ENCODE measurements at regions of chr18 and their contacts with region 1.

Region 1: DNA sequence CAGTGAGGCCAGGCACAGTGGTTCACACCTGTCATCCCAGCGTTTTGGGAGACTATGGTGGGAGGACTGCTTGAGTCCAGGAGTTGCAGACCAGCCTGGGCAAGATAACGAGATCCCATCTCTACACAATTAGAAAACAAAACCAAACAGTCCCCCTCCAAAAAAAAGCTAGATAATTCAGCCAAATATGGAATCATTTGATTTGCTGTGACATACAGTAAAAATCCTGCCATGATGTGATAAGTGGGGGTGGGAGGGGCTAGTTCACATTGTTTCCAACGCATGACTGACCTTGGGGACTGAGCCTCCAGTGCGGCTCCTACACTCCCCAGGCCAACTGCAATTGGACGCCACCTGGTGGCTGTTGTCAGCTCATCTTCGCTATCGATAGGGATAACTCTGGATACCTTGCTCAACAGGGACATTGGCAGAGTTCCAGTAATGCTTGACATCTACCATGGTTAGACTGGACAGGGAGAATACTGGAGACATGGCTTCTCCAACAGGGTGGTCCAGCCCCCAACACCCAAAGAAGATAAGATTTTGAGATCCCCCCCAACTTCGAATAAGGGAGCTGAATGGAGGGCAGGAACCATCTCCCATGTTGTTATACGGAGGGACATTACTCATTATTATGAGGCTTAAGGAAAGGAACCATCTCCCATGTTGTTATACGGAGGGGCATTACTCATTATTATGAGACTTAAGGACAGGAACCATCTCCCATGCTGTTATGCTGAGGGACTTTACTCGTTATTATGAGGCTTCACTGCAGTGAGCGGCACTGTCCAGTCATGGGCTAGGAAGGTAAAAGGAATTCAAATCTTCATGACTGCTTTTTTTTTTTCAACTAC is 135.9 kb downstream of the TGIF1 start:
- DNase-seq: peak; percentile 40
- ATAC-seq: peak; percentile 45
- H3K4me3 Mint-ChIP-seq: peak overlapping the region; percentile 74
- H3K27ac Mint-ChIP-seq: peak overlapping the region; percentile 96
- H3K4me1 Mint-ChIP-seq: peaks cover 53% of the 10 kb centered on the region
- H3K27me3 Mint-ChIP-seq: no peaks in the 10 kb centered on the region
- CTCF ChIP-seq: no peak

Region 2: GRCh38 chr18:2846636-2847364 is 739.1 kb before region 1 on chr18 and contains the start of gene EMILIN2:
- CTCF ChIA-PET with region 1: no interaction called
- POLR2A ChIA-PET with region 1: no interaction called
- intact Hi-C with region 1: loop called (anchors 5 kb)
- DNase-seq: peak; percentile 87
- ATAC-seq: peak; percentile 81
- H3K4me3 Mint-ChIP-seq: peak within 1 kb of the TSS; percentile 96
- H3K27ac Mint-ChIP-seq: peak within 1 kb of the TSS; percentile 94
- H3K4me1 Mint-ChIP-seq: peaks cover 52% of the 10 kb centered on the region
- H3K27me3 Mint-ChIP-seq: peaks cover 8% of the 10 kb centered on the region
- CTCF ChIP-seq: no peak
- total RNA-seq, gene EMILIN2: 73.0 and 80.9 TPM in 2 replicates

Region 3: GRCh38 chr18:3297025-3297984 is 288.6 kb before region 1 on chr18:
- CTCF ChIA-PET with region 1: interaction called, 5 read pairs
- POLR2A ChIA-PET with region 1: interaction called, 7 read pairs
- intact Hi-C with region 1: loop called (anchors 2 kb)
- DNase-seq: peak; percentile 82
- ATAC-seq: peak; percentile 99
- H3K4me3 Mint-ChIP-seq: peak overlapping the region; percentile 95
- H3K27ac Mint-ChIP-seq: peak overlapping the region; percentile 83
- H3K4me1 Mint-ChIP-seq: peaks cover 11% of the 10 kb centered on the region
- H3K27me3 Mint-ChIP-seq: peaks cover 6% of the 10 kb centered on the region
- CTCF ChIP-seq: no peak

Region 4: GRCh38 chr18:3402982-3403451 is 182.9 kb before region 1 on chr18:
- CTCF ChIA-PET with region 1: interaction called, 6 read pairs
- POLR2A ChIA-PET with region 1: interaction called, 15 read pairs
- intact Hi-C with region 1: loop called (anchors 2 kb)
- DNase-seq: no peak
- ATAC-seq: peak; percentile 20
- H3K4me3 Mint-ChIP-seq: peak overlapping the region; percentile 15
- H3K27ac Mint-ChIP-seq: peak overlapping the region; percentile 94
- H3K4me1 Mint-ChIP-seq: peaks cover 60% of the 10 kb centered on the region
- H3K27me3 Mint-ChIP-seq: no peaks in the 10 kb centered on the region
- CTCF ChIP-seq: no peak

Region 5: GRCh38 chr18:3498698-3499471 is 87.0 kb before region 1 on chr18:
- CTCF ChIA-PET with region 1: interaction called, 9 read pairs
- POLR2A ChIA-PET with region 1: interaction called, 15 read pairs
- intact Hi-C with region 1: no loop called
- DNase-seq: peak; percentile 33
- ATAC-seq: peak; percentile 70
- H3K4me3 Mint-ChIP-seq: peak overlapping the region; percentile 80
- H3K27ac Mint-ChIP-seq: peak overlapping the region; percentile 25
- H3K4me1 Mint-ChIP-seq: peaks cover 32% of the 10 kb centered on the region
- H3K27me3 Mint-ChIP-seq: peaks cover 14% of the 10 kb centered on the region
- CTCF ChIP-seq: no peak

Region 6: DNA sequence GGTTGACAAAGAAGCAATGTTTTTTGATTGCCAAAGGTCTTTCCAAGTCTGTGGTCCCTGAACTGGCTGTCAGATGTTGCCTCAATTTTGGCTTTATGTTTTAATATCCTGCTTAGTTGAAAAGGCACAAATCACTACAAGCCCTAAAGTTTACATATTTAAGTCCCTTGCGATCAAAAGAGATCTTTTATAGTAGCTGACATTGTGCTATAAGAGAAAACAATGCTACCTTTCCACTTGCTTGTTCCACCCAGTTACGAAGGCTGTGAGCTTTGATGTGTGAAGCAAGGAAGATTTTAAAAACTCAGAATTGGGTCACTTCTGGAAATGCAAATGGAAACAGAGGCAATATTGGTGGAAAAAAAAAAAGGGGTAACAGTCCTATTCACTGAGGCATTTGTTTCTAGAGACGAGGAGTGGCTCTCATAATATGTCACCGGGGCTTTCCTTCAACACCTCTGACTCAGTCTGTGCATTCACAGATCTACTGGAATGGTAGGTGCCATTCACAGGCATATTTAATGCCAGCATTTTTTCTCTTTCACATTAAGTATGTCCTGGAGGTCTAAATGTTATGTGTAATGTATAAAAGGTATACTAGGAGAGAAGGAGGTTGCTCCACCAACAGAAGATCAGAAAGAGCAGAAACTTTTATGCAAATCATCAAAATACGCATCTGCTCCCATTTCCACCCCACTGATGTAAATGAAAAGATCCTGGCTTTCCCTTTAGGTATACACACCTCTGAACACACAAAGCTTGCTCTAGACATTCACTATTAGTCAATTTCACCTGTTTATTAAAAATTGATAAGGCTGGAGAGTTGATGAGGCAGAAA is 44.1 kb before region 1 on chr18:
- CTCF ChIA-PET with region 1: no interaction called
- POLR2A ChIA-PET with region 1: no interaction called
- intact Hi-C with region 1: loop called (anchors 2 kb)
- DNase-seq: no peak
- ATAC-seq: peak; percentile 83
- H3K4me3 Mint-ChIP-seq: peak overlapping the region; percentile 0
- H3K27ac Mint-ChIP-seq: peak overlapping the region; percentile 64
- H3K4me1 Mint-ChIP-seq: peaks cover 22% of the 10 kb centered on the region
- H3K27me3 Mint-ChIP-seq: no peaks in the 10 kb centered on the region
- CTCF ChIP-seq: no peak

Region 7: DNA sequence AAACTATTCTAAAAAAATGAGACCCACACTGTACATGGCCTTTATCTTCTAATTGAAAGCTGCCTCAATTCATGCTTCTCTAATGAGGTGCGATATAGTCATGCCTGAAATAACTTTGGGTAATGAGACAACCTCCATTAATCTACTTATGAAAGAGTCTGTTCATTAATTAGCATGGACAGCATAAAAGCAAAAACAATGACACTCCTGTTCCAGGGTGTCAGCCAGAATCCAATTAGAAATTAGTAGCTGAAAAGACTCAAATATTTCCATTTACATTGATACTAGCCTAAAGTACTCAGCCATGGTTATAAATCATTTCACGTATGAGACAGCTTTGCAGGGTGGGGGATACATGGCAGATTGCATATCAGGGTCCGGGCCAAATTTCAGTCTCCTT is 1322.4 kb after region 1 on chr18:
- CTCF ChIA-PET with region 1: no interaction called
- POLR2A ChIA-PET with region 1: no interaction called
- intact Hi-C with region 1: no loop called
- DNase-seq: no peak
- ATAC-seq: no peak
- H3K4me3 Mint-ChIP-seq: no peak overlapping the region
- H3K27ac Mint-ChIP-seq: no peak overlapping the region
- H3K4me1 Mint-ChIP-seq: no peaks in the 10 kb centered on the region
- H3K27me3 Mint-ChIP-seq: no peaks in the 10 kb centered on the region
- CTCF ChIP-seq: no peak